PC-3 (cell line): ENCODE measurements at regions of chr9 and their contacts with region 1.

Region 1: DNA sequence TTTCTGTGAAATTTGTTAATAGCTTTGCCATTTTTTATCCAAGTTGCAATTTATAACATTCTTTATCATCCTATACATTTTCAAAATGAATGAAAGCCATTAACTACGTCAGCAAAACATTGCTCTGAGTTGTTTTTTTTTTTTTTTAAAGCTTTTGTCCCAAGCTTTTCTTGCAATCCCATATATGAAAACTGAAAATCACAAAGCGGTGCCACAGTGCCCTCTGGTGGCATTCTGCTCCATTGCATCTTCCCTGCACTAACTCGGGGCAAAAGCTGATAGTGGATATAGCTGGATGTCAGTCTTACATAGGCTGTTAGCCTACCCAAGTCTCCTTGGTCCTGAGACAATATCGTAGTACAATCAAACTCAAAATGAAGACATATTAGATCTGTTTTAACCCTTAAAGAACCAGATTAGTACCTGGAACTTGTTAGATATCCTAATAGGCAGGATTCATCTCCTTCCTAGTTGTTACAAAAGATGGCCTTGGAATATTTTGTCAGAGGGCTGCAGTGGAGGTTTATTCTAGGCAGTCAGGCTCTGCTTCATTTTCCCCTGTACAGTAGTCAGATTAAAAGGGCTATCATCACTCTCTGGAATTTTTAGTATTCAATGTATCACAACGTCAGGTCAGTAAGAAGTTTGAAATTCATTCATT is 669.9 kb downstream of the PTPRD start:
- DNase-seq: peak; percentile 65
- ATAC-seq: peak; percentile 40; the same call in 1 of the 2 replicates
- H3K4me3 ChIP-seq: no peak overlapping the region
- H3K27ac ChIP-seq: no peak overlapping the region
- H3K4me1 ChIP-seq: no peaks in the 10 kb centered on the region
- H3K27me3 ChIP-seq: no peaks in the 10 kb centered on the region
- CTCF ChIP-seq: peak; percentile 74

Region 2: GRCh38 chr9:9362332-9362731 is 580.6 kb before region 1 on chr9:
- CTCF ChIA-PET with region 1: interaction called, 16 read pairs
- POLR2A ChIA-PET with region 1: no interaction called
- intact Hi-C with region 1: no loop called
- DNase-seq: no peak
- ATAC-seq: no peak
- H3K4me3 ChIP-seq: no peak overlapping the region
- H3K27ac ChIP-seq: no peak overlapping the region
- H3K4me1 ChIP-seq: no peaks in the 10 kb centered on the region
- H3K27me3 ChIP-seq: no peaks in the 10 kb centered on the region
- CTCF ChIP-seq: no peak

Region 3: GRCh38 chr9:9448796-9449195 is 494.1 kb before region 1 on chr9:
- CTCF ChIA-PET with region 1: interaction called, 18 read pairs
- POLR2A ChIA-PET with region 1: no interaction called
- intact Hi-C with region 1: no loop called
- DNase-seq: no peak
- ATAC-seq: no peak
- H3K4me3 ChIP-seq: no peak overlapping the region
- H3K27ac ChIP-seq: no peak overlapping the region
- H3K4me1 ChIP-seq: no peaks in the 10 kb centered on the region
- H3K27me3 ChIP-seq: no peaks in the 10 kb centered on the region
- CTCF ChIP-seq: no peak

Region 4: DNA sequence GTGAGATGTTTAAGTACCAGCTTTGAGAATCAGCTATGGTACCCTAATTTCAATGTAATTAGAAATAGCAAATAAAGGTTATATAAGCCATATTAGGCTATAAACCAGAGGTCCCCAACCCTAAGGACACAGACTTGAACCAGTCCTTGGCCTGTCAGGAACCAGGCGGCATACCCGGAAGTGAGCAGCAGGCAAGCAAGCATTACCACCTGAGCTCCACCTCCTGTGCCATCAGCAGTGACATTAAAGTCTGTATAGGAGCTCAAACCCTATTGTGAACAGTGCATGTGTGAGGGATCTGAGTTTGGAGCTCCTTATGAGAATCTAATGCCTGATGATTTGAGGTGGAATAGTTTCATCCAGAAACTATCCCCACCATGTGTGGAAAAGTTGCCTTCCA is 339.5 kb before region 1 on chr9:
- CTCF ChIA-PET with region 1: interaction called, 13 read pairs
- POLR2A ChIA-PET with region 1: no interaction called
- intact Hi-C with region 1: loop called (anchors 10 kb)
- DNase-seq: no peak
- ATAC-seq: no peak
- H3K4me3 ChIP-seq: no peak overlapping the region
- H3K27ac ChIP-seq: no peak overlapping the region
- H3K4me1 ChIP-seq: no peaks in the 10 kb centered on the region
- H3K27me3 ChIP-seq: no peaks in the 10 kb centered on the region
- CTCF ChIP-seq: no peak

Region 5: GRCh38 chr9:9790216-9790872 is 152.6 kb before region 1 on chr9:
- CTCF ChIA-PET with region 1: interaction called, 17 read pairs
- POLR2A ChIA-PET with region 1: no interaction called
- intact Hi-C with region 1: loop called (anchors 5 kb)
- DNase-seq: peak; percentile 44
- ATAC-seq: peak; percentile 42
- H3K4me3 ChIP-seq: no peak overlapping the region
- H3K27ac ChIP-seq: no peak overlapping the region
- H3K4me1 ChIP-seq: no peaks in the 10 kb centered on the region
- H3K27me3 ChIP-seq: no peaks in the 10 kb centered on the region
- CTCF ChIP-seq: peak; percentile 63

Region 6: GRCh38 chr9:10032166-10032565 is 89.3 kb after region 1 on chr9:
- CTCF ChIA-PET with region 1: interaction called, 12 read pairs
- POLR2A ChIA-PET with region 1: no interaction called
- intact Hi-C with region 1: no loop called
- DNase-seq: peak; percentile 3
- ATAC-seq: no peak
- H3K4me3 ChIP-seq: no peak overlapping the region
- H3K27ac ChIP-seq: no peak overlapping the region
- H3K4me1 ChIP-seq: no peaks in the 10 kb centered on the region
- H3K27me3 ChIP-seq: no peaks in the 10 kb centered on the region
- CTCF ChIP-seq: no peak

Region 7: DNA sequence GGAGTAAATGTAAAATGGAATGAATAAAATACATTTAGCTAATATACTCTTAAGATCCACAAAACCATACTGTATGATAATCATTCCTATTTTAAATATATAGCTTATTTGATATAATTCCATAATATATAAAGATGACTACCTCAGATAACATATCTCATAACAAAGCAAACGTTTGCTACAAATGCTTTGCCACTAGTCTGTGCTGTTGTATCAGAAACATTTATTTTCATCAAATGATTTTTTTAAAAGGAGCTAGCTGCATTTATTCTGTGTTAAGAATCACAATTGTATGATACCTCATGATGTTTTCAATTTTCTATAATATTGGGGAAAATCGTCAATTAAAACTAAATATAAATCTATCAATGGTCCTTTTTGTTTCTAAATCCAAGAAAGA is 102.7 kb after region 1 on chr9:
- CTCF ChIA-PET with region 1: no interaction called
- POLR2A ChIA-PET with region 1: no interaction called
- intact Hi-C with region 1: no loop called
- DNase-seq: peak; percentile 28
- ATAC-seq: peak; percentile 24; the same call in 1 of the 2 replicates
- H3K4me3 ChIP-seq: no peak overlapping the region
- H3K27ac ChIP-seq: no peak overlapping the region
- H3K4me1 ChIP-seq: no peaks in the 10 kb centered on the region
- H3K27me3 ChIP-seq: no peaks in the 10 kb centered on the region
- CTCF ChIP-seq: peak; percentile 42